Gastrocnemius medialis (tissue), 4 donors: ENCODE measurements at regions of chr2 and their contacts with region 1.

Region 1: DNA sequence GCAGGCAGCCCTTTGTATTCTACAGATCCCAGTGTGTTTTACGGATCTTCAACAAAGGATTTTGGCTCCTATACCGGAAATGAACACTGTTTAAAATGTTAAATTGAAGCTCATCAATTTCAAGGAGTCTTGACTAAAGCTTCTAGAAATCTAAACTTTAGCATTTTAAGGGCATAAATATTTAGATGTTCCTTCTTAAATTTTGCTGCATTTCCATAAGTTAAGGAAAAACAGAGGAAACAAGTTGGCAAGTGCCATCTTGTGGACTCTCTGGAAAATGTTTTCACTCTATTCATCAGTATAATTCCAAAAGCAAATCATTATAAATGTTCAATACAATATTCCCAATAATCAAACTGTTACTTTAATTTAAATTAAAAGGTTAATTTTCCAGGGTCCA is 19.6 kb downstream of the CHN1 start:
- DNase-seq: no peak
- ATAC-seq: no peak
- H3K4me3 ChIP-seq: no peak overlapping the region
- H3K27ac ChIP-seq: no peak overlapping the region
- H3K4me1 ChIP-seq: no peaks in the 10 kb centered on the region
- H3K27me3 ChIP-seq: no peaks in the 10 kb centered on the region
- CTCF ChIP-seq: peak in 3 of 5 experiments; percentile 44 to 45 (median 44)
- POLR2A ChIP-seq: no peak

Region 2: GRCh38 chr2:174748948-174749347 is 236.7 kb before region 1 on chr2:
- in situ Hi-C with region 1: loop called in 1 of 4 experiments (anchors 10 kb)
- intact Hi-C with region 1: no loop called
- DNase-seq: peak in 1 of 2 donors; percentile 22
- ATAC-seq: peak; percentile 68 to 81
- H3K4me3 ChIP-seq: no peak overlapping the region
- H3K27ac ChIP-seq: no peak overlapping the region
- H3K4me1 ChIP-seq: no peaks in the 10 kb centered on the region
- H3K27me3 ChIP-seq: no peaks in the 10 kb centered on the region
- CTCF ChIP-seq: peak; percentile 50 to 75 (median 63)
- POLR2A ChIP-seq: no peak

Region 3: DNA sequence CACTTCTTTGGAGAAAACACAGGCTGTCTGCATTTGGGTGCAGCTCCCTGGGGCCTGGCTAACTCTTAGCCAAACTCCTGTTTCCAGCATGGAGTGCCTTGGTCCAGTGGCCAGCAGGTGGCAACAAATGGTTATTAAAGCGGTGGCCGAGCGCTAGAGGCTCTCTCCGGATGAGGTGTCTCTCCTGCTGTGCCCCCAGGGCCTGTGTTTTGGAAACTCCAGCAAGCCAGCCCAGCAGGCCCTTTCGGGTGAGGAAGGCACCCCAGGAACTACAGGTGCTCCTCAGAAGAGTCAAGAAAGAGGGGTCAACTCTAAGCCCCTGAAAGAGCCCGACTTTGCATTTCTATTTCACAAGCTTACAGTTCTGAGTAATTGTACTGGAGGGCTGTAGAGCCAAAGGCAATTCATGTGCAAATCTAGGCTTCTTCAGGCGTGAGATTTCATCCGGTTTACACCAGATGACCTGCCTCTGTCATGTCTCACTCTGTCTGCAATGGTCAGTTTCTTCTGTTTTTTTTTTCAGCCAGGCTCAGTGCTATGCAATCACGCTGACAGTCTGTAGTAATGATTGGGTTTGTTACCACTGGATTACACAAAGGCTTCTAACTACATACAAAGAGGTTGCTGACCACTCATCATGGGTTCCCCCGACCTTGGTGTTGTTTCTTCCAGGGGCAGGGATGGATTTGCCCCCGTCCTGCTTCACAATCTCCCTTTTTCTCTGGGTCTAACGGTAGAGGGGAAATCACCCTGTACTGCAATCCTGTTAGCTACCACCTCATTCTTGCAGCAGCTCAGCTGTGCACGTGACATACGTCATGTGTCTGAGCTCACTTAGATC is 213.8 kb before region 1 on chr2:
- in situ Hi-C with region 1: loop called (anchors 5 to 10 kb)
- intact Hi-C with region 1: loop called (anchors 2 kb)
- DNase-seq: peak; percentile 44 to 56
- ATAC-seq: peak; percentile 83 to 90
- H3K4me3 ChIP-seq: no peak overlapping the region
- H3K27ac ChIP-seq: peak overlapping the region in 2 of 4 donors; percentile 15 to 37
- H3K4me1 ChIP-seq: peaks cover 6 to 8% of the 10 kb centered on the region in 2 donors
- H3K27me3 ChIP-seq: no peaks in the 10 kb centered on the region
- CTCF ChIP-seq: peak; percentile 61 to 83 (median 76)
- POLR2A ChIP-seq: no peak

Region 4: DNA sequence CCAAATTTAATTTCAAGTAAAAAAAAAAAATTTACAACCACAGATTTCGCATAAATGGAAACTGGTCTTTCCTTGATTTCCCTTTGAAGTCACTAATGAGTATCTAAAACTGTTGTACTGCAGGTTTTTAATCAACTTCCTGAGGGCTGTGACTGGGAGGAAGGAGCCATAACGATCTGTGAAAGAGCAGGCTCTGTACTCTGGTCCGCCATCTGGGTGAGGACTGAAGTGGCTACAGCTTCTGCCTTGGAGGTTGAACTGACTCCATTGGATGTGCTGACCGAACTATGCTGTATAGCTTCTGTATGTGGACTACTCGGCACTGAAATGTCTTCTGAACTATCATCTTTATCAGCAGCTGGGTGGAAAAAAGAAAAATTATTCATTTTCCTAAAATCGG is 88.8 kb after region 1 on chr2:
- in situ Hi-C with region 1: no loop called
- intact Hi-C with region 1: no loop called
- DNase-seq: no peak
- ATAC-seq: no peak
- H3K4me3 ChIP-seq: no peak overlapping the region
- H3K27ac ChIP-seq: no peak overlapping the region
- H3K4me1 ChIP-seq: no peaks in the 10 kb centered on the region
- H3K27me3 ChIP-seq: no peaks in the 10 kb centered on the region
- CTCF ChIP-seq: no peak
- POLR2A ChIP-seq: no peak